ENCODE measurements at regions of chr5 and their contacts with region 1.

Region 1: GRCh38 chr5:34529536-34530306 is 126.4 kb upstream of the RAI14 start:
- DNase-seq: no peak
- H3K4me3 ChIP-seq: no peak overlapping the region
- H3K27ac ChIP-seq: no peak overlapping the region
- H3K4me1 ChIP-seq: peaks cover 6 to 15% of the 10 kb centered on the region in 2 donors
- H3K27me3 ChIP-seq: no peaks in the 10 kb centered on the region
- CTCF ChIP-seq: no peak
- POLR2A ChIP-seq: no peak

Region 2: GRCh38 chr5:34898258-34898895 is 368.7 kb after region 1 on chr5:
- intact Hi-C with region 1: loop called (anchors 5 kb)
- DNase-seq: peak; percentile 58 to 66
- H3K4me3 ChIP-seq: no peak overlapping the region
- H3K27ac ChIP-seq: no peak overlapping the region
- H3K4me1 ChIP-seq: no peaks in the 10 kb centered on the region
- H3K27me3 ChIP-seq: no peaks in the 10 kb centered on the region
- CTCF ChIP-seq: peak in 5 of 6 experiments; percentile 65 to 78 (median 76)
- POLR2A ChIP-seq: no peak